MCF 10A (cell line): ENCODE measurements at regions of chr21 and their contacts with region 1.

Region 1: GRCh38 chr21:29024474-29025327 is at the start of gene USP16:
- DNase-seq: peak; percentile 97
- H3K4me3 Mint-ChIP-seq: peak within 1 kb of the TSS; percentile 85
- H3K27ac Mint-ChIP-seq: peak within 1 kb of the TSS; percentile 98
- H3K4me1 Mint-ChIP-seq: peaks cover 13% of the 10 kb centered on the region
- H3K27me3 Mint-ChIP-seq: no peaks in the 10 kb centered on the region
- CTCF ChIP-seq: no peak
- total RNA-seq, gene USP16: 28.0 and 39.3 TPM in 2 replicates

Region 2: GRCh38 chr21:28781602-28782276 is 243.0 kb before region 1 on chr21:
- CTCF ChIA-PET with region 1: no interaction called
- POLR2A ChIA-PET with region 1: no interaction called
- intact Hi-C with region 1: no loop called
- DNase-seq: peak; percentile 43
- H3K4me3 Mint-ChIP-seq: no peak overlapping the region
- H3K27ac Mint-ChIP-seq: no peak overlapping the region
- H3K4me1 Mint-ChIP-seq: no peaks in the 10 kb centered on the region
- H3K27me3 Mint-ChIP-seq: no peaks in the 10 kb centered on the region
- CTCF ChIP-seq: peak; percentile 18

Region 3: GRCh38 chr21:28992526-28993292 is 32.0 kb before region 1 on chr21 and contains the start of gene LTN1:
- CTCF ChIA-PET with region 1: no interaction called
- POLR2A ChIA-PET with region 1: interaction called, 61 read pairs
- intact Hi-C with region 1: loop called (anchors 2 kb)
- DNase-seq: peak; percentile 99
- H3K4me3 Mint-ChIP-seq: peak within 1 kb of the TSS; percentile 95
- H3K27ac Mint-ChIP-seq: peak within 1 kb of the TSS; percentile 99
- H3K4me1 Mint-ChIP-seq: peaks cover 22% of the 10 kb centered on the region
- H3K27me3 Mint-ChIP-seq: no peaks in the 10 kb centered on the region
- CTCF ChIP-seq: no peak
- total RNA-seq, gene LTN1: 27.1 and 34.3 TPM in 2 replicates

Region 4: DNA sequence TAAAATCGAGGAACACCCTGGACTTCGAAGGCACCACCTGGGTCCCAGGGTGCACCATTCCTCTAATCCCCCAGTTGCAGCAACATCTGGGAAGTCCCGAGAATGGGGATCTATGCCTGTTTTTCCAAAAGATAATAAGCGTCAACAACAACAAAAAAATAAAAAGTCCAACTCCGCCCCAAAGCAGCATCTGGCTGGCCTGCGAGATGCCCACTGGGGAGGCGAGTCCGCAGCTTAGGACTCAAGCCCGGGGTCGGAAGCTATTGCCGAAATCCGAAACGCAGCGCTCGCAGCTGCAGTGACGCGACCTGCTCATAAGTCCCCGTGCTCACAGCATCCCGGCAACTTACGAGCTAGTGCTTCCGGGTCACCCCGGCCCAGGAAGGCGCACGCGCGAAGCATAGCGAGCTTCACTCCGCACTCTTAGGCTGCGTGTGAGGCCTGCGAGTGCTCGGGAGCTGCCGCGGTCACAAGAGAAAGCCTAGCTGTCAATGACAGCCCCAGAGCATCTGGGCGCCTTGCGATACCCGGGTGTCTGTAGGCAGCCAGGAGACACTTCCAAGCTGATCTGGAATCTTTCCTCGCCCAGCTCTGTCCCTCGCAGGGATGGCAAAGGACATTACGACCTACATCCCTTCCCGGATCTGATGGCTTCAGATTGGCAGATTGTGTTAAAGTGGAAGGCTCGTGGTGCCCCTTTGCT is 22.1 kb before region 1 on chr21:
- CTCF ChIA-PET with region 1: interaction called, 3 read pairs
- POLR2A ChIA-PET with region 1: interaction called, 89 read pairs
- intact Hi-C with region 1: no loop called
- DNase-seq: peak; percentile 94
- H3K4me3 Mint-ChIP-seq: peak overlapping the region; percentile 78
- H3K27ac Mint-ChIP-seq: peak overlapping the region; percentile 91
- H3K4me1 Mint-ChIP-seq: no peaks in the 10 kb centered on the region
- H3K27me3 Mint-ChIP-seq: no peaks in the 10 kb centered on the region
- CTCF ChIP-seq: no peak

Region 5: GRCh38 chr21:29064850-29065481 is 40.3 kb after region 1 on chr21:
- CTCF ChIA-PET with region 1: no interaction called
- POLR2A ChIA-PET with region 1: interaction called, 126 read pairs
- intact Hi-C with region 1: no loop called
- DNase-seq: no peak
- H3K4me3 Mint-ChIP-seq: no peak overlapping the region
- H3K27ac Mint-ChIP-seq: no peak overlapping the region
- H3K4me1 Mint-ChIP-seq: no peaks in the 10 kb centered on the region
- H3K27me3 Mint-ChIP-seq: no peaks in the 10 kb centered on the region
- CTCF ChIP-seq: no peak